CD8-positive, alpha-beta T cell (primary cell): ENCODE measurements at regions of chr4 and their contacts with region 1.

Region 1: DNA sequence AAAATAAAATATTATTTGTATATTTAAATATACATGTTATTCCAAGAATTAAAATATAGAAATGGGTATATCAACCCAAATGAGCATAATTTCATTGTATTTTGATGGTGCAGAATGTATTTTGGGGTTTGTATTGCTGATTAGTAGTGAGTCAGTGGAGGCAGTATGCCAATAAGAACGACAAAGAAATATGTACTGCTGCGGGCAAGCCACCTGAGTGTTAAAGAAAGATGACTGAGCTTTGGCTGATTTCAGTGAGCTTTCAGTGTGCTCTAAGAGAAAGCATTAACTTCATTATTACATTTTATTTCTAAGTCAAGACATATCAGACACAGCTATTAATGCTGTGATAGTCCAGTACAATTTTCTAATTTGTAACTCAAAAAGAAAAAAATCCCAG is 297.8 kb downstream of the ANK2 start:
- DNase-seq: no peak
- ATAC-seq: no peak
- H3K4me3 ChIP-seq: no peak overlapping the region
- H3K4me3 Mint-ChIP-seq: no peak overlapping the region
- H3K27ac ChIP-seq: no peak overlapping the region
- H3K27ac Mint-ChIP-seq: no peak overlapping the region
- H3K4me1 ChIP-seq: no peaks in the 10 kb centered on the region
- H3K4me1 Mint-ChIP-seq: no peaks in the 10 kb centered on the region
- H3K27me3 ChIP-seq: no peaks in the 10 kb centered on the region
- H3K27me3 Mint-ChIP-seq: peaks cover 8% of the 10 kb centered on the region
- CTCF ChIP-seq: no peak

Region 2: GRCh38 chr4:113368056-113368455 is 20.8 kb after region 1 on chr4:
- CTCF ChIA-PET with region 1: no interaction called
- POLR2A ChIA-PET with region 1: no interaction called
- intact Hi-C with region 1: loop called in 1 of 2 experiments (anchors 2 kb)
- DNase-seq: no peak
- ATAC-seq: no peak
- H3K4me3 ChIP-seq: no peak overlapping the region
- H3K4me3 Mint-ChIP-seq: no peak overlapping the region
- H3K27ac ChIP-seq: no peak overlapping the region
- H3K27ac Mint-ChIP-seq: no peak overlapping the region
- H3K4me1 ChIP-seq: no peaks in the 10 kb centered on the region
- H3K4me1 Mint-ChIP-seq: no peaks in the 10 kb centered on the region
- H3K27me3 ChIP-seq: peaks cover 0 to 3% of the 10 kb centered on the region in 2 experiments
- H3K27me3 Mint-ChIP-seq: no peaks in the 10 kb centered on the region
- CTCF ChIP-seq: no peak

Region 3: DNA sequence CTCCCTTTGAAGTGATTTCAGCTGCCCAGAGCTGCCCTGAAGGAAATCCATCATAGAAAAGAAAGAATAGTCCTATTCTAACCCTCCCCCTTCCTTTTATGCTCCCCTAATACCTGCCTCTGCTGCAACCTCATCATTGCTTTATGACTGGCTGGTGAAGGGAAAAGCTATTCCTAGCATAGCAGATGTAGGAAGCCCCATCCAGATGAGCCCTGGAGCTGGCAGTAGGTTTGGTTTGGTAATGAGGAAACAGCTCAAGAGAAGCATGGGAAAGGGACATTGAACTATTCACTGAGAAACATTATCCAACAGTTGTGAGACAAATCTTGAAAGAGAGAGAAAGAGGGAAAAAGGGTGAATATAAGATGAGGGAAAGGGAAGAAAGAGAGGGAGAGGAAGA is 603.0 kb after region 1 on chr4:
- CTCF ChIA-PET with region 1: no interaction called
- POLR2A ChIA-PET with region 1: no interaction called
- intact Hi-C with region 1: no loop called
- DNase-seq: no peak
- ATAC-seq: no peak
- H3K4me3 ChIP-seq: no peak overlapping the region
- H3K4me3 Mint-ChIP-seq: no peak overlapping the region
- H3K27ac ChIP-seq: no peak overlapping the region
- H3K27ac Mint-ChIP-seq: no peak overlapping the region
- H3K4me1 ChIP-seq: no peaks in the 10 kb centered on the region
- H3K4me1 Mint-ChIP-seq: peaks cover 8% of the 10 kb centered on the region
- H3K27me3 ChIP-seq: no peaks in the 10 kb centered on the region
- H3K27me3 Mint-ChIP-seq: peaks cover 4% of the 10 kb centered on the region
- CTCF ChIP-seq: no peak